Thyroid gland (tissue), 4 donors: ENCODE measurements at regions of chr11 and their contacts with region 1.

Region 1: GRCh38 chr11:101583251-101584128 is at the start of gene TRPC6:
- DNase-seq: peak; percentile 85 to 87
- H3K4me3 ChIP-seq: peak within 1 kb of the TSS; percentile 13 to 68 (median 62)
- H3K27ac ChIP-seq: peak within 1 kb of the TSS; percentile 79 to 96 (median 85)
- H3K4me1 ChIP-seq: peaks cover 6 to 10% of the 10 kb centered on the region in 2 donors
- H3K27me3 ChIP-seq: no peaks in the 10 kb centered on the region
- CTCF ChIP-seq: no peak
- POLR2A ChIP-seq: peak in 1 of 2 donors; percentile 85
- total RNA-seq, gene TRPC6: 14.1 to 28.4 (median 19.4) TPM

Region 2: GRCh38 chr11:101497291-101497690 is 86.2 kb before region 1 on chr11:
- intact Hi-C with region 1: loop called (anchors 10 kb)
- DNase-seq: no peak
- H3K4me3 ChIP-seq: no peak overlapping the region
- H3K27ac ChIP-seq: no peak overlapping the region
- H3K4me1 ChIP-seq: no peaks in the 10 kb centered on the region
- H3K27me3 ChIP-seq: no peaks in the 10 kb centered on the region
- CTCF ChIP-seq: no peak
- POLR2A ChIP-seq: no peak

Region 3: DNA sequence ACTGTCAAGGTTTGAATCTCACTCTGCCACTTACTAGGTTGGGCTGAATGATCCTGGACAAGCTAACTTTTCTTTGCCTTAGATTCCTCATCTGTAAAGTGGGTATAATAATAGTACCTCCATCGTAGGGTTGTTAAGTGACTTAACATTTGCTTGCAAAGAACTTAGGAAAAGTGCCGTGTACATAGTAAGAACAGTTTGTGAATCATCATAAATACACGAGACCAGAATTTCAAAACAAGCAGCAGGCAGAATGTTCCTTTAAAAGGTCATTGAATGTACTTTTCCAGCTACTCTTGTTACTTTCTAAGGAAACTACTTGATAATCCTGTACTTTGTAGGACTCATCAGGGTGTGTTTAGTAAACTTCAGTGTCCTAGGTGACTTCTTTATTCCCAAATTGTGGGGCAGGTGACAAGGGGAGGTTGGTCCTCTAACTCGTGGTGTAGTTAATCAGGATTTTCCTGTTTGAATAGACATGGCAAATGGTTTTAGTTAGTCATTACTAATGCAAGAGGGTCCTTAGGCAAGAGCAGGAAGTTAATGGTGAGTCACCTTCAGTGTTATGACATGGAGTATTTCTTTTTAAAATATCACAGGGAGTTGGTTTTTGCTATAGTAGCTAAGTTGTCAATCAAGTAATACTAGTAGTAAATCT is 594.6 kb after region 1 on chr11:
- intact Hi-C with region 1: no loop called
- DNase-seq: peak in 1 of 2 donors; percentile 6
- H3K4me3 ChIP-seq: no peak overlapping the region
- H3K27ac ChIP-seq: peak overlapping the region; percentile 22 to 73 (median 59)
- H3K4me1 ChIP-seq: peaks cover 9 to 17% of the 10 kb centered on the region in 2 donors
- H3K27me3 ChIP-seq: no peaks in the 10 kb centered on the region
- CTCF ChIP-seq: no peak
- POLR2A ChIP-seq: no peak